GM10248 (cell line): ENCODE measurements at regions of chr1 and their contacts with region 1.

Region 1: GRCh38 chr1:180178511-180179161 is 24.0 kb downstream of the QSOX1 start:
- DNase-seq: peak; percentile 83
- CTCF ChIP-seq: peak; percentile 82

Region 2: GRCh38 chr1:179706339-179706941 is 472.2 kb before region 1 on chr1:
- CTCF ChIA-PET with region 1: interaction called, 64 read pairs
- POLR2A ChIA-PET with region 1: no interaction called
- DNase-seq: peak; percentile 51
- CTCF ChIP-seq: peak; percentile 70

Region 3: GRCh38 chr1:179860652-179861051 is 318.0 kb before region 1 on chr1:
- CTCF ChIA-PET with region 1: interaction called, 163 read pairs
- POLR2A ChIA-PET with region 1: no interaction called
- DNase-seq: no peak
- CTCF ChIP-seq: no peak

Region 4: GRCh38 chr1:179867807-179868330 is 310.8 kb before region 1 on chr1:
- CTCF ChIA-PET with region 1: interaction called, 163 read pairs
- POLR2A ChIA-PET with region 1: no interaction called
- DNase-seq: peak; percentile 52
- CTCF ChIP-seq: peak; percentile 71

Region 5: GRCh38 chr1:180154325-180155181 is 24.1 kb before region 1 on chr1 and contains the start of gene QSOX1:
- CTCF ChIA-PET with region 1: interaction called, 16 read pairs
- POLR2A ChIA-PET with region 1: no interaction called
- DNase-seq: peak; percentile 100
- CTCF ChIP-seq: no peak

Region 6: GRCh38 chr1:180198196-180198595 is 19.6 kb after region 1 on chr1:
- CTCF ChIA-PET with region 1: interaction called, 30 read pairs
- POLR2A ChIA-PET with region 1: interaction called, 3 read pairs
- DNase-seq: no peak
- CTCF ChIP-seq: no peak